Posterior vena cava (tissue), 2 donors: ENCODE measurements at regions of chr9 and their contacts with region 1.

Region 1: DNA sequence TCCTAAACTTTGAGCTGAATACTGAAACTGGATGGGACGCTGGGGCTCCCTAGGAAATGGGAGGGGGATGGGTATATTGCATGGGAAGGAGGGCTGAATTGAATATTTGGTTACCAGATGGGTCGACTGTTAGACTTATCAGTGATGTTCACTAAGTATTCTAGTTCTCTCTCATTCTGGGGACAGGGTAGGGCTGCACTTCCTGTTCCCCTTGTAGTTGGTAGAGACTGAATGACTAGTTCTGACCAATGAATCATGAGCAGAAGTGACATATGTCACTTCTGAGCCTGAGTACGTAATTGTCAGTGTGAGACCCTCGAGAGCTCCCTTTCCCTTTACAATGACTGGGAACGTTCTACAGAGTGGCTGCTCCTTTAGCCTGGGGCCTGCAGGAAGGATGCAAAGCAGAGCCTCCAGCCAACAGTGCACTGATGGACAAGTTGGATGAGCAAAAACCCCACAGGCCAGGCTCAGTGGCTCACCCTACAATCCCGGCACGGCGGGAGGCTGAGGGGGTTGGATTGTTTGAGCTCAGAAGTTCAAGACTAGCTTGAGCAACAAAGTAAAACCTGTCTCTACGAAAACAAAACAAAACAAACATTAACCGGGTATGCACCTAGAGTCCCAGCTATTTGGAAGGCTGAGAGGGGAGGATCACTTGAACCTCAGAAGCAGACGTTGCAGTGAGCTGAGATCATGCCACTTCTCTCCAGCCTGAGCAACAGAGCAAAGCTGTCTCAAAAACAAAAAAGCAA is 55.3 kb upstream of the DMRT1 start:
- DNase-seq: no peak

Region 2: GRCh38 chr9:394347-395052 is 391.7 kb before region 1 on chr9:
- intact Hi-C with region 1: loop called in 1 of 2 experiments (anchors 10 kb)
- DNase-seq: no peak

Region 3: DNA sequence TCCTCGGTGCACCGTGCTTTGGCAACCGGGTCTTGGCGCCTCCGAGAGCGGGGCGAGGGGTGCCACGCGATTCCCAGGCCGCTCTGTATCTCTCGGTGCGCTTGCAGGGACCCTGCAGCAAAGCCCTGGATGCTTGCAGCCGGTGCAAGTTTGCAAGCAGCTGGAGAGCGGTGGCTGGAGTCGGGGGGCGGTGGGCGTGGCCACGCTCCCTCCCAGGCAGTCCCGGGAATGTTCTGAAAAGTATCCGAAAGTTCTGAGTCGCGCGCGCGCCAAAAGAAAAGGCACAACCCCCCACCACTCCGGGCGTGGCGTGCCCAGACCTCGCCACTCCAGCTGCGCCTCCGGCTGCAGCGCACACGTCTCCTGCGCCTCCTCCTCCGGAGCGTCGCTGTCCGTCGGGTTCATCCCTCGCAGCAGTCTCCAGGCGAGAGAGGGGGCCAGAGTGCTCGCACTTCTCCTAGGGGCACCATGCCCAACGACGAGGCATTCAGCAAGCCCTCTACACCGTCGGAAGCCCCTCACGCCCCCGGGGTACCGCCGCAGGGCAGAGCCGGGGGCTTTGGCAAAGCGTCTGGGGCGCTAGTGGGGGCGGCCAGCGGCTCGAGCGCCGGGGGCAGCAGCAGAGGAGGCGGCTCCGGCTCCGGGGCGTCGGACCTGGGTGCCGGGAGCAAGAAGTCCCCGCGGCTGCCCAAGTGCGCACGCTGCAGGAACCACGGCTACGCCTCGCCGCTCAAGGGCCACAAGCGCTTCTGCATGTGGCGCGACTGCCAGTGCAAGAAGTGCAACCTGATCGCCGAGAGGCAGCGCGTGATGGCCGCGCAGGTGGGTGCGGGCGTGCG is 55.4 kb after region 1 on chr9 and contains the start of gene DMRT1:
- intact Hi-C with region 1: no loop called
- DNase-seq: no peak
- total RNA-seq, gene DMRT1: not detected

Region 4: DNA sequence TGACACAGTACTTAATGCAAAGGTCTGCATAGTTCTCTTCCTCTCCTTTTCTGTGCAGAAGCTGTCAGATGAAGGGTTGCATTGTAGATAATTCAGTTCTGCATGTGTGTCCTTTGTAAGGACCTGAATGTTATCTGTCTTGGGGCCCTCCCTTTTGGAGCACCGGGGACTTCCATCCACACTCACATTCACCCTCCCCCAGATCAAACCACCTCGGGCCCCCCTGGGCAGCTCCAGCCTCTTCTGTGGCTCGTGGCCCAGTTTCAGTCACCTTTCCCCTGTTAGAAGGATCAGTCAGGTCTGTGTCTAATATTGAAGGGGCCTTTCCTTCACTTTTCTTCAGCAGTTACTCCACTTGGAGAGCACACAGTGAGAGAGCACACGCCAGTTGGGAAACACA is 66.4 kb after region 1 on chr9:
- intact Hi-C with region 1: loop called in 1 of 2 experiments (anchors 2 kb)
- DNase-seq: no peak